CD4-positive, alpha-beta memory T cell (primary cell): ENCODE measurements at regions of chr17 and their contacts with region 1.

Region 1: DNA sequence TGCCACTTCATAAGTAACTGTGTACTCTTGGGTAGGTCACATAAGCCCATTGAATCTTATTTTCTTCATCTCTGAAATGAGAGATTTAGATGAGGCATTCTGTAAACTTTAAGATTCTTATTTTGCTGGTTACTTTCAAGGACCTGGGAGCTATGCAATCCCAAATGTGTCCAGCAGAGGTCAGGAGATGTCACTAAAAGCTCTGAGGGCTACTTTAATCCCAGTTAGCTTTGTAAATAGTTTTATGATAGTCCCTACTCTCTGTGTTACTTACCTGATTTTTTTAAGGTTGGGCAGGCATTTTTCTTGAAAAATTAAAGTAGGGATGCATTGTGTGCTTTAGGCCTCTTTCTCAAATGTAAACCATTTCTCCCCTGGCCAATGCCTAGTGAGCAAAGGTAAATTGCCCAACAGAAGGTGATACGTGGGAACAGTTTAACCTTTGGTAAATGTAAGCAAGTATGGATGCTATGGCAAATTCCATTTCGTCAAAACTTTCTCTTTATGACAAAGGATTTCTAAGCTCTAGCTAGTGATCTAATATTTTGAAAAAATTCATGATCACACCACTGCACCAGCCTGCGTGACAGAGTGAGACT is 57.1 kb upstream of the WSB1 start:
- DNase-seq: peak; percentile 57 to 72 (median 64)
- H3K4me3 ChIP-seq: no peak overlapping the region
- H3K4me3 Mint-ChIP-seq: no peak overlapping the region
- H3K27ac ChIP-seq: no peak overlapping the region
- H3K27ac Mint-ChIP-seq: peak overlapping the region in 1 of 7 donors; percentile 41
- H3K4me1 ChIP-seq: no peaks in the 10 kb centered on the region
- H3K4me1 Mint-ChIP-seq: no peaks in the 10 kb centered on the region
- H3K27me3 ChIP-seq: no peaks in the 10 kb centered on the region
- H3K27me3 Mint-ChIP-seq: no peaks in the 10 kb centered on the region

Region 2: GRCh38 chr17:27217631-27218030 is 19.2 kb before region 1 on chr17:
- CTCF ChIA-PET with region 1: interaction called, 14 read pairs
- POLR2A ChIA-PET with region 1: no interaction called
- intact Hi-C with region 1: no loop called
- DNase-seq: peak in 2 of 5 donors; percentile 16 to 47
- H3K4me3 ChIP-seq: no peak overlapping the region
- H3K4me3 Mint-ChIP-seq: peak overlapping the region in 1 of 8 donors; percentile 43
- H3K27ac ChIP-seq: no peak overlapping the region
- H3K27ac Mint-ChIP-seq: peak overlapping the region in 2 of 7 donors; percentile 16 to 39
- H3K4me1 ChIP-seq: peaks cover 21% of the 10 kb centered on the region
- H3K4me1 Mint-ChIP-seq: peaks cover 10 to 23% (median 16%) of the 10 kb centered on the region in 4 donors
- H3K27me3 ChIP-seq: no peaks in the 10 kb centered on the region
- H3K27me3 Mint-ChIP-seq: peaks cover 0 to 5% of the 10 kb centered on the region in 2 donors

Region 3: DNA sequence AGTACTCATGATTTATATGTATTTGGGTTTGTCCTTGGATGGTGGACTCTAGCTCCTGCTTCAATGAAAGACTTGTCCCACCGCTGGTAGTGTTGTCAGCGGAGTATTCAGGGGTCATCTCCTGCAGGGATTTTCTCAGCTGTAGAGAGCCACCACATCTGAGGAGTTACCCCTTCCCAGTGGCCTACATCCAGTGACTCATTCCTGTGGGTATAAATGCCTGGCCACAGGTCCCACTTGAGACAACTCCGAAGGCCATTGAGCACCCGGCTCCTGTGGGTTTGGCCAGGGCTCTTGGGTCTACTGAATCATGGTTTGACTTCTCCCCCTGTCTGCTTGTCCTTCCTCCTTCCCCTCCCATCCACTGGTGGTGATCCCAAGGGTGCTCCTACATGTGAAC is 22.5 kb after region 1 on chr17:
- CTCF ChIA-PET with region 1: interaction called, 10 read pairs
- POLR2A ChIA-PET with region 1: no interaction called
- intact Hi-C with region 1: no loop called
- DNase-seq: no peak
- H3K4me3 ChIP-seq: no peak overlapping the region
- H3K4me3 Mint-ChIP-seq: no peak overlapping the region
- H3K27ac ChIP-seq: no peak overlapping the region
- H3K27ac Mint-ChIP-seq: peak overlapping the region in 1 of 7 donors; percentile 35
- H3K4me1 ChIP-seq: no peaks in the 10 kb centered on the region
- H3K4me1 Mint-ChIP-seq: no peaks in the 10 kb centered on the region
- H3K27me3 ChIP-seq: no peaks in the 10 kb centered on the region
- H3K27me3 Mint-ChIP-seq: no peaks in the 10 kb centered on the region

Region 4: DNA sequence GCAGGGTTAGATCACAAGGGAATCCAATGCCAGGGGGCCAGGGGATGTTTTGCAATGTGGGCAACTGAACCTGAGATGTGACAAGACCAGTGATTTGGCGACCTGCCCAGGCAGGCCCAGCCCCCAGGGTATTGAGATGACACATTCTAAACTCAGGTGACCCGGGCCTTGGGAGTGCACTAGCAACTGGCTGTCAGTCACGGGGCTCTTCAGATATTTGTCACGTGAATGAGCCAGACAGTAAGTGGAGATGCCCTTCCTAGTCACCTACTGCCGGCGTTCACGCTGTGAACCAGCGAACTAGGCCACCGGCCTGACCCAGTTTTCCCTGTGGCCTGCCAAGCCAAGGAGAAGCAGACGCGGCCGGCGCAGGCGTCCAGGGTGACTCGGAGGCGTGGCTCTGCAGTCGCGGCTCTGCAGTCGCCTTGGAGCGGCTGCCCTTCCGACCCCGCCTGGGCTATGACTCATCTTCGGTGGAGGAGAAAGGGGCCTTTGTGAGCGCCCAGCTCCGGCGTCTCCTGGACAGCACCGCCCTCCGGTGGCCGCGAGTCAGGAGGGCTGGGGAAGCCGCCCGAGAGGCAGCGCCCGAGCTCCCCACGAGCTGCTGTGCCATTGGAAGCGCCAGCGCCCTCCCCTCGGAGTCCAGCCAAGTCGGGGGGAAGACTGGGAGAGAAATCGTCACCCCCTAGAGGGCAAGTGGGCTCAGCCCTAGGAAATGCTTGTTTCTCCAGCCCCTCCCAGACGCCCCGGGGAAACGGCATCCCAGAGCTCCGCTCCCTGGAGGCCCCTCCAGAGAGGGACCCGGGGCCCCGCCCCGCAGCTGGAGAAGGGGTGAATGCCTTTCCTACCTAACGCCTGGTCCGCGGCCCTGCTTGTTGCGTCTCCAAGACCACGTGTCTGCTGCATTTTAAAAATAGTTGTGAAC is 95.9 kb after region 1 on chr17:
- CTCF ChIA-PET with region 1: interaction called, 155 read pairs
- POLR2A ChIA-PET with region 1: interaction called, 20 read pairs
- intact Hi-C with region 1: loop called (anchors 1 kb)
- DNase-seq: peak; percentile 79 to 97 (median 80)
- H3K4me3 ChIP-seq: peak overlapping the region; percentile 47 to 57
- H3K4me3 Mint-ChIP-seq: peak overlapping the region; percentile 72 to 91 (median 85)
- H3K27ac ChIP-seq: peak overlapping the region; percentile 47
- H3K27ac Mint-ChIP-seq: peak overlapping the region; percentile 68 to 93 (median 87)
- H3K4me1 ChIP-seq: peaks cover 7% of the 10 kb centered on the region
- H3K4me1 Mint-ChIP-seq: peaks cover 9 to 22% (median 17%) of the 10 kb centered on the region in 4 donors
- H3K27me3 ChIP-seq: no peaks in the 10 kb centered on the region
- H3K27me3 Mint-ChIP-seq: no peaks in the 10 kb centered on the region

Region 5: DNA sequence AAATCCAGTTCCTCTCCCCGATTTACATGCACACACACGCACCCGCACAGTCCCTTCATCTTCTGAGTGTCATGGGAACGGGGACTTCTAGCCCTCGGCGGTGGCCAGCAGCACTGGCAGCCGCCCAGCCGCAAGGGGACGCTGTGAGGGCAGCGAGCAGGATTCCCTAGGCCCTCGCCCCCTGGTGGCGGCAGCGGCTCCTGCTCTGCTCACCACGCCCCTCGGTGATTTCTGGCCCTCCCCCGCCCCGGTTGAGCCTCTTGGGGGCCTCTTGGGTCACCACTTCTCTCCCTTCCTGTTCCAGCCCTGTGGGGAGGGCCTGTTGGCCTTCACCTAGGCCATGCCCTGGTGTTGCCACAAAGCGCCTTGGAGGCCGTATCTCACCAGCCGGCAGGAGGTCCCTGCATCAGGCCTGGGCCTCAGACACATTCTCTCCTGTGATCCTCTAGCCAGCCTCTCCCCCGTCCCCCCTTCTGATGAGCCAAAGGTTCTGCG is 144.2 kb after region 1 on chr17:
- CTCF ChIA-PET with region 1: interaction called, 18 read pairs
- POLR2A ChIA-PET with region 1: no interaction called
- intact Hi-C with region 1: no loop called
- DNase-seq: peak; percentile 65 to 72 (median 68)
- H3K4me3 ChIP-seq: no peak overlapping the region
- H3K4me3 Mint-ChIP-seq: no peak overlapping the region
- H3K27ac ChIP-seq: no peak overlapping the region
- H3K27ac Mint-ChIP-seq: peak overlapping the region in 2 of 7 donors; percentile 57 to 71
- H3K4me1 ChIP-seq: peaks cover 4% of the 10 kb centered on the region
- H3K4me1 Mint-ChIP-seq: peaks cover 0 to 8% (median 2%) of the 10 kb centered on the region in 4 donors
- H3K27me3 ChIP-seq: no peaks in the 10 kb centered on the region
- H3K27me3 Mint-ChIP-seq: peaks cover 1 to 8% of the 10 kb centered on the region in 2 donors

Region 6: DNA sequence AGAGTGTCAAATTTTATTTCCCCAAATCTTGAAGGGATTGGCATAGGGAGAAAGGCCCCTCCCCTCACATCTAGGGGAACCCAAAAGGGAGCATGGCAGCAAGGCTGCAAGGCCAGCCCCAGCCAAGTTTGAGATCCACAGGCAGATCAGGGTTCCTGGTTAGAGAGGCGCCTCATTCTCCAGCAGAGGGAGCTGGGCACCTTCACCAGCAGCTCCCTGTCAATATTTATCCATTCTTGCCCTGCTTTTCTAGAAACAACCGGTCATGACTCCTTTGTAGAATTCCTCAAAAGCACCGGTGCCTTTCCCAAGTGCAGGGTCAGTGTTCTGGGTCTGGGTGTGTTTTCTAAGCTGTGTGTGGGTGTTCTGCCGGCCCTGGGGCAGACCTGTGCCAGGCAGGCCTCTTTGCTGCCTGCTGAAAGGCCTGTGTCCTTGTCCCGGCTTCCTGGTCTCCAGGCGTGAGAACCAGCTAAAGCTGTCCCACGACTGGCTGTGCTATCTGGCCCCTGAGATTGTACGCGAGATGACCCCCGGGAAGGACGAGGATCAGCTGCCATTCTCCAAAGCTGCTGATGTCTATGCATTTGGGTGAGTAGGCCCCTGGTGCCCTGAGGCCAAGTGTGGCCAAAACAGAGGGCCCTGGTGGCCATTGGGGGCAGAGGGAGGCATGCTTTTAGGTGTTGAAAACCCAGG is 372.9 kb after region 1 on chr17:
- CTCF ChIA-PET with region 1: interaction called, 332 read pairs
- POLR2A ChIA-PET with region 1: no interaction called
- intact Hi-C with region 1: no loop called
- DNase-seq: peak in 2 of 5 donors; percentile 7 to 16
- H3K4me3 ChIP-seq: no peak overlapping the region
- H3K4me3 Mint-ChIP-seq: no peak overlapping the region
- H3K27ac ChIP-seq: no peak overlapping the region
- H3K27ac Mint-ChIP-seq: no peak overlapping the region
- H3K4me1 ChIP-seq: no peaks in the 10 kb centered on the region
- H3K4me1 Mint-ChIP-seq: peaks cover 0 to 6% (median 1%) of the 10 kb centered on the region in 4 donors
- H3K27me3 ChIP-seq: no peaks in the 10 kb centered on the region
- H3K27me3 Mint-ChIP-seq: no peaks in the 10 kb centered on the region

Region 7: GRCh38 chr17:28097901-28098300 is 861.1 kb after region 1 on chr17:
- CTCF ChIA-PET with region 1: no interaction called
- POLR2A ChIA-PET with region 1: no interaction called
- intact Hi-C with region 1: no loop called
- DNase-seq: no peak
- H3K4me3 ChIP-seq: no peak overlapping the region
- H3K4me3 Mint-ChIP-seq: no peak overlapping the region
- H3K27ac ChIP-seq: no peak overlapping the region
- H3K27ac Mint-ChIP-seq: no peak overlapping the region
- H3K4me1 ChIP-seq: no peaks in the 10 kb centered on the region
- H3K4me1 Mint-ChIP-seq: peaks cover 0 to 6% (median 0%) of the 10 kb centered on the region in 4 donors
- H3K27me3 ChIP-seq: no peaks in the 10 kb centered on the region
- H3K27me3 Mint-ChIP-seq: no peaks in the 10 kb centered on the region